ENCODE measurements at regions of chr4 and their contacts with region 1.

Region 1: DNA sequence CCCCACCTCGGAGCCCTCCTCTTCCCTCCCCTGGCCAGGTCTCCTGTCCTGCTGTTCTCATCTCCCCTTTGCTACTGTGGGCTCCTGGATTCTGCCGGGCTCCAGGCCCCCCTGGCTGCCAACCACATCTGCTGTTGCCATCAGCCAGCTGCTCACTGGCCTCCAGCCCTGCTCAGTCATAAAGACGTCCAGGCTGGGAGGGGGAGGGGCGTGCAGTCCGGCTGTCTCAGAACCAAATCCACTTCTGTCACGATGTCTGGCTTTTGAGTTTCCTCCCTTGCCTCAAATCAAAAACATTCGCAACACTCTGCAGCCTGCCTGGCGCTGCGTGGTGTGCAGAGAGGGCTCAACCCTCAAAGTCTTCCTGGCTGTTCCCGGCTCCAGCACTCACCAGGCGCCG is 7.1 kb downstream of the RASL11B start:
- DNase-seq: peak; percentile 83

Region 2: GRCh38 chr4:52595001-52595400 is 274.2 kb before region 1 on chr4:
- intact Hi-C with region 1: no loop called
- DNase-seq: no peak

Region 3: GRCh38 chr4:52659001-52659721 is 210.0 kb before region 1 on chr4 and contains the start of gene USP46:
- intact Hi-C with region 1: loop called (anchors 2 kb)
- DNase-seq: peak; percentile 90
- total RNA-seq, gene USP46: 111 TPM

Region 4: GRCh38 chr4:52837726-52838558 is 31.3 kb before region 1 on chr4:
- intact Hi-C with region 1: loop called (anchors 2 kb)
- DNase-seq: no peak

Measured in cardiac septum (tissue), 1 donor.